ENCODE measurements at regions of chr10 and their contacts with region 1.

Region 1: GRCh38 chr10:117216611-117217195 is 19.4 kb downstream of the KCNK18 start:
- DNase-seq: no peak
- H3K4me3 ChIP-seq: peak overlapping the region; percentile 67
- CTCF ChIP-seq: peak; percentile 100

Region 2: DNA sequence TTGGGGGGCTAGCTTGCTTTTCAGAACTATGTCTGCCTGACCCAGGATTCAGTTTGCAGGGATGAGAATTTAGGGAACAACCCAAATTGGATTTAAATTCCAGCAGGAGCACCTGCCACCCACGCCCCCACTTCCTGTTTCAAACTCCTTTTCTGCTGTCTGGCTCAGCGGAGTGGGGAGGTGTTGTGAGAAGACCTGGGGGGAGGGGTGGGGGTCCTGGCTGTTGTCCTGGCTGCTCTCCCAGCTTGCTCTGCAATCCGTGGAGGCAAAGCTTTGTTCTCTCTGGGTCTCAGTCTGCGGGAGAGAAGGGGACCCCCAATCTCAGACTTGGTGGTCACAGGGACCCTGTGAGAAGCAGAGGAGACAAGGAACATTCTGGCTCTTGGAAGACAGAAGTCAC is 18.6 kb before region 1 on chr10:
- CTCF ChIA-PET with region 1: interaction called, 12 read pairs
- POLR2A ChIA-PET with region 1: no interaction called
- DNase-seq: no peak
- H3K4me3 ChIP-seq: no peak overlapping the region
- CTCF ChIP-seq: no peak

Region 3: DNA sequence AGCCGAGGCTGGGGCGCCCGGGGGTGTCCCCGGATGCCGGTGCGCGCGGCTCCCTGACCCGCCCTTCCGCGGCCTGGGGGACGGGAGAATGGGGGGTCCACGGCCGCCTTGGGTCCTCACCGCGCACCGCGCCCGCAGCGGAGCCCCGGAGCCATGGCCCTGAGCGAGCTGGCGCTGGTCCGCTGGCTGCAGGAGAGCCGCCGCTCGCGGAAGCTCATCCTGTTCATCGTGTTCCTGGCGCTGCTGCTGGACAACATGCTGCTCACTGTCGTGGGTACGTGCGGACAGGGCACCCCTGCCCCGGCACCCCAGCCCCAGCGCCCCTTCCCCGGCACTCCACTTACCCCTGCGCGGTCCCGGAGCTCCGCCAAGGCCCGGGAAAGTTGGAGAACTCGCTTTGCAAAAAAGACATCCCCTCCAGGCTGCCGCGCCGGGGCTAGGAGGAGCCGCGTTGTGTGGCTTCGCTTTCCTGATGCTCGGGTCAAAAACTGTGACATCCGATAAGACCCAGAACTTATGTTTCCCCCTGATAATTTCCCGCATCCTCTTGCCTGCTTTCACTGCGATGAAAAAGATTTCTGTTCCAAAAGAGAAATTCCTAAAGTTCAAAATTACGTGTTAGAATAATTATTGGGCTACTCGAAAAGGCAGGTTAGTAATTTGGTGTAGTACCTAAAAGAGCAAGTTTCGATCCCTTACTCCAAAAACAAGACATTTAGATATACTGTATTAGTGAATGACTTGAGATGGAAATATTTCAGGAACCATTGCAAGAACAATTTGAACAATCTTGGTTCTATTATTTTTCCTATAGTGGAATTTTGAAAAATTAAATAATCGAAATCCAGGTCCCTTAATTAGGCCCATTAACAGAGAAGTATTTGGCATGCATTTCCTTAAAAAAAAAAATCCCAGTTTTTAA is 25.1 kb after region 1 on chr10:
- CTCF ChIA-PET with region 1: interaction called, 28 read pairs
- POLR2A ChIA-PET with region 1: no interaction called
- DNase-seq: no peak
- H3K4me3 ChIP-seq: no peak overlapping the region
- CTCF ChIP-seq: no peak

Region 4: DNA sequence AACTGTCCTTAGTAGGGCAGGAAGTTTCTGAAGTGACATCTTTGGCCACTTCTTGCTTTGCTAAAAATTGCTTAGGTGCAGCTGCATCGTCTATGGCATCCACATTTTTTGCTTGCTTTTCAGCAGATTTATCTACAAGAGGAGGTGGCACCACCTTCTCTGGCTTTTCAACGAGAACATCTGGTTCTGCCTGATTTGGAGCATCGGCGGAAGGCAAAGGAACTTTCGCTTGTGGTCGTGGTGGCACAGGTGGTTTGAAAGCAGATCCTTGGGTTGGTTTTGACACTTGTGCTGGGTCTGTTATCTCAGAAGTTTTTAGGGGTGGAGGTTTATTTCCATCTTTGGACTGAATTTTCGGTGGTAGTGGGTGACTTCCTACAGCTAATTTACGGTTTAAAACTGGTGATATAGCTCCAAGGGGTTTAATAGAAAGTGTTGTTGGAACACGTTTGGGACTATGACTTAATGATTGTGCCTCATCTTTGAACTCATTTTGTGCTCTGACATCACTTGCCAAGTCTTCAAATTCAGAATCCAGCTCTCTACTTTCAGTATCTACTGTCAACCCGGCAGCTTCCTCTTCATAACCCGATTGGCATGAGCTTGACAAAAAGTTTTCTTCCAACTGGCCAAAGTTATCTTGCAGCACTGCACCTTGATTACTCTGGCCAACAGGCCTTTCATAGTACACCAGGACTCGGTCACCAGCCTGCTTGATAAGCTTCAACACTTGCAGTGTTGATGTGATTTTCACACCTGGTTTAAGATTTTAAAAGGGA is 68.2 kb after region 1 on chr10:
- CTCF ChIA-PET with region 1: interaction called, 27 read pairs
- POLR2A ChIA-PET with region 1: no interaction called
- DNase-seq: no peak
- H3K4me3 ChIP-seq: no peak overlapping the region
- CTCF ChIP-seq: no peak

Region 5: DNA sequence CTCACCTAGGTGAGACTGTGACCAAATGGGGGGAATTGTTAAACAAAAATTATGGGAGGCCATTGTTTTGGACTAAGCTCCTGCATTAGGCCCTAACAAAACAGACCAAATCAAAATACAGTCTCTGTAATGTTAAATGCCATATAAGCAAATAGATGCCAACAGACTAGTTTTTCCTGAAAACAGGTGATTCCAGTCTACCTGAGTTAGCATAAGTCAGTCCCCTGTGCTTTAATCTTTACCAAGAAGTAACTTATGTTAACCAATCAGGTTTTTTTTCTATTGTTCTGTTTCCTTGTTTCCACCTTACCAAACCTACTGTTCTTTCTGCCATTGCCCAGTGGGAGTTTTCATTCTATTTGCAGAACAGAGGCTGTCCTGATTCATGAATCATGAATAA is 110.6 kb after region 1 on chr10:
- CTCF ChIA-PET with region 1: interaction called, 48 read pairs
- POLR2A ChIA-PET with region 1: no interaction called
- DNase-seq: no peak
- H3K4me3 ChIP-seq: no peak overlapping the region
- CTCF ChIP-seq: no peak

Region 6: DNA sequence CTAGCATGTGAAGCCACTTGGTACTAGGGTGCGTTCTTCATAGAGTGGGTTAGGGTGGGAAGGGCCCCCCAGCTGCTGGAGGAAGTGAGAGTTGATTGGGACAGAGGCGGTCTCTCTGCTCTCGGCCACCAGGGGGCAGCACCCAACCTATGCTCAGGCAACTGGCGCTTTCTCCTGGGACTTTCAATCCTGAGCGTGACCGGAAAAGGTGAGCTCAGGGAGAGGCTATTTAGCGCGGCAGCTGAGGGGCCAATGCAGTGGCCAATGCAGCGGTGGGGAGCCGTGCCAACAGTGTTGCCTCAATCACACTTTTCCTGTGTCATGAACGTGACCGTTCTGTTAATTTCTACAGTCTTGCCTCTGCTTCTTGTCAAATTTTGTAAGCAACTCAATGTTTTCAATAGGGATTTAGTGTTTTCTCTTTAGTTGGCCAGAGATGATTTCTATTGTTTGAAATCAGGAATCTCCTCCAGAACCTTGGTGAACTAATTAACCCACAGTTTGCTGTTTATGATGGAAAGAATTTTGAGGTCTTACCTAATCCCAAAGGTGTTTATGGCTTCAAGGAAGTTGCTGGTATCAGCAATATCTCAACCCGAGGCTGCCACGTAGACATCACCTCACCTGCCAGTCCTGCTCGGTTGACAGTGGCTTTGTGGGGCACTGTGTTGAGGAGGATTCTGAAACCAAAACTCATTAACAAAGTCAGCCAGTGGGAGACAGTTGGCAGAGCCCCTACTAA is 226.4 kb after region 1 on chr10:
- CTCF ChIA-PET with region 1: interaction called, 17 read pairs
- POLR2A ChIA-PET with region 1: no interaction called
- DNase-seq: no peak
- H3K4me3 ChIP-seq: peak overlapping the region; percentile 27
- CTCF ChIP-seq: peak; percentile 95